Posterior vena cava (tissue), 2 donors: ENCODE measurements at regions of chr16 and their contacts with region 1.

Region 1: DNA sequence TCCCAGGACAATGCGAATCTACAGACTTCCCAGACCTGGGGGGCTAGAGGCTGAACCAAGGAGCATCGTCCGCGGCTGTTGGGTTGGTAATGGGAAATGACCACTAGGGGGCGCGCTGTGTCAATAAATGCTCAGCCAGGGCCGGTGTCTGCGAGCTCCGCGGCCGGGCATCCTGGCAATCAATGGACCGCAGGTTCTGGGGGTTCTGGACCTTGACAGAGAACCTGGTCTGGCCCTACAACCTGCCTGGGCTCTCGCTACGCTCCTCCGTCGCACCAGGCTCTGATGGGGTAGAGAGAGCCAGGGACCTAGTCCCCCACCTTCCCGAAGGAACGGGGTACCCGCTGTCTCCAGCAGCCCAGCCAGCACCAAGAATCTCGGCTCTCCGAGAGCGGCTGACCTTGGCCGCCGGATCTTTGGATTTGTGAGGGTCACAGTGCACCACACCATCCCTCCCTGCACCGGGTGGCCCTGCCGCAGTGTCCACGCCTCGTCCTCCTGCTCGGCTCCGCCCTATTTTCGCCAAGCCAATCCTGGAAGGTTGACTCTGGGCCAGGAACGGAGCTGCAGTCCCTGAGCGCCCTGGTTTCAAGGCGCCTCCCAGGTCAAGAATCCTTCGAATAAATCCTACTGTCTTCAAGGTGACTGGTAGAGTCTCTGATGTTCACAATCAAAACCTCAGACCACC is 20.4 kb upstream of the BEAN1 start:
- DNase-seq: peak; percentile 96

Region 2: GRCh38 chr16:66344533-66345145 is 62.0 kb before region 1 on chr16:
- intact Hi-C with region 1: no loop called
- DNase-seq: no peak

Region 3: GRCh38 chr16:66483689-66484481 is 77.2 kb after region 1 on chr16:
- intact Hi-C with region 1: loop called in 1 of 2 experiments (anchors 5 kb)
- DNase-seq: peak; percentile 95

Region 4: DNA sequence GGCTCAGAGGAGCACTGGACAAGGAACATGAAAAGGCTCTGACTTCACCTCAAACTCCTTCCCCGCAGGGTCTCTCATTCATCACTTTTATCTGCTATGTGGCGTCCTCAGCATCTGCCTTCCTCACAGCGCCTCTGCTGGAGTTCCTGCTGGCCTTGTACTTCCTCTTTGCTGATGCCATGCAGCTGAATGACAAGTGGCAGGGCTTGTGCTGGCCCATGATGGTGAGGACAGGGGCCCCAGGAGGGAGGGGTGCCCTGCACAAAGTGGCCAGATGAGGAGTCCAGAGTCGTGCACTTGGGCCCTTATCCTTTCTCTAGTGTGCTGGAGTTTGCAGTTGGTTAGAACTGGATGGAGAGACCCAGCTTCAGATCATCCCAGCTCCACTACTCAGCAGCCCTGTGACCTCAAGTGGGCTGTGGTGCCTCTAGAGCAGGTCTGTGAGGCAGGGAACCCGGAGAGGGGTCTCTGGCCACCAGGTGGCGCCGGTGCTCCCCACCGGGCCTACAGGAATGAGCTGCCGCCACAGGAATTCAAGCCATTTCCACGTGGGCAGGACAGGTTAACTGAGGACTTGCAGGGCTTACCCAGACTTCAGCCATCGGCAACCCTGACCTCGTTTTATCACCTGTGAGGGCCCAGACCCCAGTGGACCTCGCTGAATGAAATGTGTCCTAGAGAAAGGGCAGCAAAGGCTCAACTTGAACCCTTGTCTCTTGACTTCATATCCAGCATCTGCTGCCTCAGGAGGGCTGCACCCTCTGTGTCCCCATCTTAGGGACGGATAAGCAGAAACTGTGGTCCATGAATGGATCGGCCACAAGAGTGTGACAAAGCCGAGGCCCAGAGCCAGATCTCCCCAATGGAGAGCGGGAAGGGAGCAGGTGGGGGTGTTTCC is 201.8 kb after region 1 on chr16:
- intact Hi-C with region 1: loop called in 1 of 2 experiments (anchors 5 kb)
- DNase-seq: peak; percentile 94